AG04449 (cell line): ENCODE measurements at regions of chr9 and their contacts with region 1.

Region 1: GRCh38 chr9:113622600-113623400 is 159.3 kb downstream of the RGS3 start:
- DNase-seq: no peak
- H3K4me3 ChIP-seq: no peak overlapping the region
- CTCF ChIP-seq: no peak

Region 2: DNA sequence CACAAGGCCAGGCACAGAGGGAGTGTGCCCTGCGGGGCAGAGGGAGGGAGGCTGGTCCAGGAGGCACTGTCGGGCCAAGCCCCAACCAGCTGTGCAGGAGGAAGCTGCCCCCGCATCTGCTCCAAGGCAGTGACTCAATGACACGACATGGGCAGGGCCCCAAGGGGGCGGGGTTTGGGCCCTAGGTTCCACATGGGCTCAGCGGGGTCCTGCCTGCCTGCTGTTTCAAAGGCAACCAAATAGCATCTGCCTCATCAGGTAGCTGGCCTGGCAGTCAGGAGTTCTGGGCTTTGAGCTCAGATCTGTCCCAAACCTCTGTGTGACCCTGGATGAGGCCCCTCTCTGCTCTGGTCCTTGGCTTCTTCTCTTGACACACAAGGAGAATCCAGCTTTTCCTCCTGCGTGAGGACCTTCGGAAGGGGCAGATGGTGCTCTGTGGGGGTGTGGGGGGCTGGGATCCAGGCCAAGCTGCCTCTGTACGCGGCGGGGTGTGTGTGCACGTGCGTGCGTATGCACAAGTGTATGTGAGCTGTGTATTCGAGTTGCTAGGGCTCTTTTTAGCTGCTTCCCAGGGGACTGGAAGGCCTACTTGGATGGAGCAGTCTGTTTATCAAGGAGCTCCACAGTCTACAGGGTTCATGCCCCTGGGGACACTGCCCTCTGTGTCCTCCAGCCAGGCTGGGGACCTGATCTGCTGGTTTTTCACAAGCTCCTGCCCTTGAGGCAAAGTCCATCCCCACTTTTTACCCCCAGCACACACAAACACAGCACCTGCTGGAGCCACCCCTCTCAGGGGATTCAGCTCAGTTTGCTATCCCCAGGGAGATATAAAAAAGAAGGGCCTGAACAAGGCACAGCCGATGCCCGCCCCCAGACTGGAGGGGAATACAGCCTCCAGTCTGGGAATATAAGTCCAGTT is 20.4 kb before region 1 on chr9:
- CTCF ChIA-PET with region 1: interaction called, 11 read pairs
- POLR2A ChIA-PET with region 1: interaction called, 12 read pairs
- DNase-seq: no peak
- H3K4me3 ChIP-seq: no peak overlapping the region
- CTCF ChIP-seq: no peak

Region 3: GRCh38 chr9:113609562-113610318 is 13.1 kb before region 1 on chr9:
- CTCF ChIA-PET with region 1: interaction called, 11 read pairs
- POLR2A ChIA-PET with region 1: no interaction called
- DNase-seq: no peak
- H3K4me3 ChIP-seq: no peak overlapping the region
- CTCF ChIP-seq: no peak